GM12878 (cell line): ENCODE measurements at regions of chr16 and their contacts with region 1.

Region 1: GRCh38 chr16:17277977-17278381 is 192.8 kb downstream of the XYLT1 start:
- DNase-seq: no peak
- ATAC-seq: peak; percentile 77
- H3K4me3 ChIP-seq: no peak overlapping the region
- H3K27ac ChIP-seq: no peak overlapping the region
- H3K4me1 ChIP-seq: peaks cover 39% of the 10 kb centered on the region
- H3K27me3 ChIP-seq: no peaks in the 10 kb centered on the region
- CTCF ChIP-seq: peak; percentile 59 to 66 (median 62); a peak in 5 of 6 replicates
- EP300 ChIP-seq: no peak
- POLR2A ChIP-seq: no peak
- RAD21 ChIP-seq: peak; percentile 70

Region 2: DNA sequence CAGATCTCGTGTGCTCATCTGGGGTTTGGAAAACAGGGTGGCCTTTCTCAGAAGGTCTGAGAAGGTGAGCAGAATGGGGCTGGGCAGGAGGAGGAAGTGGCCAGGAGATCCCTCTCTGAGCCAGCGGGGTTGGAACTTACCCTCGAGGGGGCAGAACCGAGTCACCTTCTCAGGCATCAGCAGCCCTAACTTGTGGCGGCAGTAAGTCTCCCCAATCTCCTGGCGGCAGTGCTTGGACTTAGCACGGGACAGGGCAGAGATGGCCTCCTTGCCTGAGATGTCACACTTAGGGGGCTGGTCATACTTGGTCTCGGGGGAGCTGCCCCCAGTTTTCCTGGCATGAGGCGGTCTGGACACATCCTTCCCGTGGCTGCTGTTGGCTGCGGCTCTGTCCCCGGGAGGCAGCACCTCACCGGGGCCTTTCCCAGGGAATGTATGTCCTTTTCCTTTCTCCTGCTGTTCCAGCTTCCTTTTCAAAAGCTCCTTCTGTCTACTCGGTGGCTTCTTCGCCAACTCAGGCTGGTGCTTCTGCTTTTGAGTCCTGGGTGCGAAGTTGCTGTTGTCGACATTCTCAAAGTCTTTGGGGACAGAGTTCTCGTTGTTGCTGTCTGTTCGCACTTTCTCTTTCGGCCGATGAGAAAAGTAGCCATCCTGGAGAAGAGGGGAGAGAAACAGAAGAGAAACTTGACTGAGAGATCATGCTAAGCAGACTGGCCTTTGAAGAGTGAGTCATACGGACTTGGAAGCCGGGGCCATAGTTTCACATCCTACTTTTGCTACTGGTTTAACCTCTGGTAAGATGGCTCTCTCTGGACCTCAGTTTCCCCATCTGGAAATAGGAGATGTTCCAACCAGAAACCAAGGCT is 18.9 kb before region 1 on chr16:
- CTCF ChIA-PET with region 1: interaction called, 41 read pairs
- POLR2A ChIA-PET with region 1: interaction called, 4 read pairs
- RAD21 ChIA-PET with region 1: interaction called, 15 read pairs
- SMC1A ChIA-PET with region 1: interaction called, 63 read pairs
- in situ Hi-C with region 1: no loop called
- intact Hi-C with region 1: no loop called
- DNase-seq: peak; percentile 79
- ATAC-seq: peak; percentile 88
- H3K4me3 ChIP-seq: peak overlapping the region; percentile 47
- H3K27ac ChIP-seq: peak overlapping the region; percentile 93
- H3K4me1 ChIP-seq: peaks cover 33% of the 10 kb centered on the region
- H3K27me3 ChIP-seq: no peaks in the 10 kb centered on the region
- CTCF ChIP-seq: peak; percentile 64 to 75 (median 68)
- EP300 ChIP-seq: peak; percentile 22 to 83; a peak in 2 of 4 replicates
- POLR2A ChIP-seq: peak; percentile 62
- RAD21 ChIP-seq: peak; percentile 68

Region 3: DNA sequence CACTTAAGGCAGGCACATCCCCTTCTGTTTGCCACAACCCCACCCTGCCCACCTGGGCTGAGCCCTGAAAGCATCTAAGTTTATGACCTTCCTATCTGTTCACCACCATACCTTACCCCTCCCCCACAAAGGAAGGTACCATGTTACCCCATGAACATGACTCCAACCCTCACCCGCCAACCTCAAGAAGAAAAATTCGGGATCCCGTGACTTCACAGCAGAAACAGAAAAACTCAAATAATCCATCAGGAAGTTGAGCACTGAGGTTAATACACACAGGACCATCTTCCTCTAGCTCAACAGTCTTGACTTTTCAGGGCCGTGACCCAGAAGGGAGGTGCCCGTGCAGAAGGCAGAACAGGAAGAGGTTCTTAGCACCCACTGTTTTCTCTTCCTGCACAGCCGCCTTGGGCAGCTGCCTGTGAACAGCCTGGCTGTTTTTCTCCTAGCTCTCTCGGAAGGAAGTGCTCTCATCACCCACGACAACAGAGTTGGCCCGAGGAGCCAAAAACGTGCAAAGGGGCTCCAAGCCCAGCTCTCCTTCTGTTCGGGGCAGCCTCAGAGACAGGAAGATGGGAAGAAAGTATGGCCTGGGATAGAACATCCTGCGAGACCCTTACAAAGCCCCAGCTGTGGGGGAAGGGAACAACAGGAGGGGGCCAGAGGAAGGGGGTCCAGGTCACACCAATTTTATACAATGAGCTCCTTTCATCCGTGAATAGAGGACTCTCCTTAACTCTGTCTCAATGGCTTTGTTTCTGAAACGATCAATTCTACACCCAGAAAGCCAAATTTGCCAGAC is 91.6 kb after region 1 on chr16:
- CTCF ChIA-PET with region 1: interaction called, 7 read pairs
- POLR2A ChIA-PET with region 1: no interaction called
- RAD21 ChIA-PET with region 1: interaction called, 12 read pairs
- SMC1A ChIA-PET with region 1: interaction called, 10 read pairs
- in situ Hi-C with region 1: no loop called
- intact Hi-C with region 1: no loop called
- DNase-seq: peak; percentile 53
- ATAC-seq: peak; percentile 94
- H3K4me3 ChIP-seq: peak overlapping the region; percentile 41; the same call in 1 of the 2 replicates
- H3K27ac ChIP-seq: peak overlapping the region; percentile 36
- H3K4me1 ChIP-seq: peaks cover 52% of the 10 kb centered on the region
- H3K27me3 ChIP-seq: no peaks in the 10 kb centered on the region
- CTCF ChIP-seq: no peak
- EP300 ChIP-seq: peak in 1 of 2 experiments; percentile 49; a peak in 1 of 4 replicates
- POLR2A ChIP-seq: peak; percentile 50
- RAD21 ChIP-seq: no peak

Region 4: GRCh38 chr16:17404941-17405689 is 127.1 kb after region 1 on chr16:
- CTCF ChIA-PET with region 1: no interaction called
- POLR2A ChIA-PET with region 1: no interaction called
- RAD21 ChIA-PET with region 1: interaction called, 4 read pairs
- SMC1A ChIA-PET with region 1: interaction called, 12 read pairs
- in situ Hi-C with region 1: no loop called
- intact Hi-C with region 1: no loop called
- DNase-seq: no peak
- ATAC-seq: no peak
- H3K4me3 ChIP-seq: no peak overlapping the region
- H3K27ac ChIP-seq: no peak overlapping the region
- H3K4me1 ChIP-seq: peaks cover 24% of the 10 kb centered on the region
- H3K27me3 ChIP-seq: no peaks in the 10 kb centered on the region
- CTCF ChIP-seq: no peak
- EP300 ChIP-seq: no peak
- POLR2A ChIP-seq: no peak
- RAD21 ChIP-seq: no peak

Region 5: GRCh38 chr16:17578921-17579874 is 301.2 kb after region 1 on chr16:
- CTCF ChIA-PET with region 1: interaction called, 20 read pairs
- POLR2A ChIA-PET with region 1: no interaction called
- RAD21 ChIA-PET with region 1: no interaction called
- SMC1A ChIA-PET with region 1: interaction called, 3 read pairs
- in situ Hi-C with region 1: no loop called
- intact Hi-C with region 1: no loop called
- DNase-seq: peak; percentile 28
- ATAC-seq: peak; percentile 93
- H3K4me3 ChIP-seq: no peak overlapping the region
- H3K27ac ChIP-seq: no peak overlapping the region
- H3K4me1 ChIP-seq: no peaks in the 10 kb centered on the region
- H3K27me3 ChIP-seq: no peaks in the 10 kb centered on the region
- CTCF ChIP-seq: peak; percentile 83 to 89 (median 84)
- EP300 ChIP-seq: no peak
- POLR2A ChIP-seq: no peak
- RAD21 ChIP-seq: peak; percentile 82